Sciatic nerve (tissue), 2 donors: ENCODE measurements at regions of chr12 and their contacts with region 1.

Region 1: DNA sequence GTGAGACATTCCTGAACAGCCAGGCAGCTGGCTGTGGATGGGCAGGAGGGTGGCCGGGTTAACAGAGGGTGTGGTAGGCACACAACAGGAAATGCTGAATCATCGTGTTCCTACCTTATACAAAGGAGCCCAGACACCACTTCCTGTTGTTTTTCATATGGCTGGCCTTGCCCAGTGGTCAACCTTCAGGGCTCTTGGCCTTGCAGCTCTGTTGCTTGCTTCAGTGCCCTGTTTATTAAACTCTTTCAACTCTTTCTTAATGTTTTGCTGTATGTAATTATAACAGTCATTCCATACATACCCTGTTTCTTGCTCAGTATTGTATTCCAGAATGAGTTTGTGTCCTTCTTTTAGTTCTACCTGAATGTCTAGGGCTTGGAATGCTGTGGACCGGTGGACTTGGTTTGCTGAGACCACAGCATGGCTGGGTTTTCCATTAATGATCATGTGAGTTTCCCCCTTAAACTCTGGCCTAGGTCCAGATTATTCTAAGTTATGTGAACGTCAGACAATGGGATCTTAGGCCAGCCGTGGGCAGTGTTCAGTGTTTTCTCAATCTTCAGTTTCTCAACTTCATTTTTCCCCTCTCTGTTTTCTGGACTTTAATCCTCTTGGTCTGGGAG is 11.9 kb downstream of the CFAP54 start:
- DNase-seq: no peak
- ATAC-seq: peak; percentile 52

Region 2: DNA sequence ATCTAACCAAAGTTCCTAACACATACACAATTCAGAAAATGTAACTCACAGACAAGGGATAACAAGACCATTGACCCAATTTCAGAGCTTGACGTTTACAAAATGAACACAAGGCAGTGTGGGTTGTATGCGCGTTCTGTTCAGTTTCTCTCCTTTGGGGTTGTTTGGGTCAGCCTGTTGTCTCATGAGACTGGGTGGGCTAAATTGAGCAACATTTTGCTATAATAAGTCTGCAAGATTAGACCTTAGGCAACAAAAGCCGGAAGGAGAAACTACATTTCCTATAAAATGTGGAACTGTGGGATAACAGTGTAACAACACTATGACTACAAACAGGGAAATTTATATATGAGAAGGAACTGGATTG is 447.0 kb before region 1 on chr12:
- intact Hi-C with region 1: loop called (anchors 10 kb)
- DNase-seq: no peak
- ATAC-seq: peak; percentile 49